ENCODE measurements at regions of chr2 and their contacts with region 1.

Region 1: DNA sequence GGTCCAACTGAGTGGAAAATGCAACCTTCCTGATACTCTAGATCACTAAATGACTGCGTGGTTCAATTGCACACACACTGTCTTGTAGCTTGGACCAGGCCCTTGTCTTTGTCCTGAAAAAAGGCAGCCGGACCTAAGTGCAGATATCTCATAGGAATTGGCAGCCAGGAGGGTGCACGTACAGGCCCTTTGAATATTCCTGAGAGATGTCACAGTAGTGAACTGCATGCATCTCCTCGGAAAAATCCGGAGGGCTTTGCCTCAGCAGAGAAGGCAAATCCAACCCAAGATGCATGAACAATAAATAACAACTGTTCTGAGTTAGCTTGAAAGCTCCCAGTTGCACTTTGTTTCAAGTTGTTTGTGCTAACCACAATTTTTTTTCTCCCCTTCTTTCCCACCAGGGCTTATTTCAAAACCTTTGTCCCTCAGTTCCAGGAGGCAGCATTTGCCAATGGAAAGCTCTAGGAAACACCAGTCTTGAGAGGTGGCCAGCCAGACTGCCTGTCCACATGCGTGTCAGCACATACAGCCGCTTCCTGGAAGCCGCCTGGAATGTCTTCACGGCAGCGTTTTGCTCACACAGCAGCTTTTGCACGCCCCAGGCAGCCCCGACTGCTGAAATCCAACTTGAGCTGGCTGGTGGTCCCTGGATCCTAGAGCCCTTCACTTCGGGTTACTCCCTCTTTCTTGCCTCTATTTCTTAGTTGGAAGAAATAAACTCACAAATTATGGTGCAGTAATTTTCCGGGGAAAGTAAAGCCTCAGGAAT is 54.4 kb upstream of the FOSL2 start:
- DNase-seq: peak; percentile 94
- H3K4me3 ChIP-seq: no peak overlapping the region
- H3K27ac ChIP-seq: peak overlapping the region; percentile 48 to 73 (median 62)
- H3K4me1 ChIP-seq: peaks cover 0 to 66% (median 50%) of the 10 kb centered on the region in 4 donors
- H3K27me3 ChIP-seq: no peaks in the 10 kb centered on the region
- CTCF ChIP-seq: no peak
- EP300 ChIP-seq: peak in 1 of 4 donors; percentile 65
- POLR2A ChIP-seq: no peak

Region 2: DNA sequence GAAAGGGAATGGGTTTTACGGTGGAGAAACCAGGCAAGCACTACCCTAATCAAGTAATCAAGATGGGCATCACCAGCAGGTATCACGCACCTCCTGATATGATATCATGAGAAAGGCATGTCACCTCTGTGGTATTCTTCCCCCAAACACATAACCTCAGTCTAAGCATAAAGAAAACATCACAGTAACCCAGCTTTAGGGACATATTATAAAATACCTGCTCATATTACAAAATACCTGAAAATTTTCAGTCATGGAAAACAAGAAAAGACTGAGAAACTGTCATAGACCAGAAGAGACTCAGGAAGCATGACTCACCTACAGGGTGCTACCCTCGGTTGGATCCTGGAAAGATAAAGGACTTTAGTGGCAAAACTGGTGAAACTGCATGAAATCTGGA is 811.0 kb before region 1 on chr2:
- intact Hi-C with region 1: no loop called
- DNase-seq: no peak
- H3K4me3 ChIP-seq: no peak overlapping the region
- H3K27ac ChIP-seq: no peak overlapping the region
- H3K4me1 ChIP-seq: no peaks in the 10 kb centered on the region
- H3K27me3 ChIP-seq: no peaks in the 10 kb centered on the region
- CTCF ChIP-seq: no peak
- EP300 ChIP-seq: no peak
- POLR2A ChIP-seq: no peak

Region 3: GRCh38 chr2:28300485-28301341 is 37.5 kb before region 1 on chr2:
- intact Hi-C with region 1: loop called (anchors 5 kb)
- DNase-seq: peak; percentile 77
- H3K4me3 ChIP-seq: peak overlapping the region; percentile 13 to 36 (median 26)
- H3K27ac ChIP-seq: peak overlapping the region; percentile 72 to 89 (median 82)
- H3K4me1 ChIP-seq: peaks cover 0 to 20% (median 19%) of the 10 kb centered on the region in 4 donors
- H3K27me3 ChIP-seq: no peaks in the 10 kb centered on the region
- CTCF ChIP-seq: no peak
- EP300 ChIP-seq: peak; percentile 86 to 97 (median 96)
- POLR2A ChIP-seq: no peak

Region 4: DNA sequence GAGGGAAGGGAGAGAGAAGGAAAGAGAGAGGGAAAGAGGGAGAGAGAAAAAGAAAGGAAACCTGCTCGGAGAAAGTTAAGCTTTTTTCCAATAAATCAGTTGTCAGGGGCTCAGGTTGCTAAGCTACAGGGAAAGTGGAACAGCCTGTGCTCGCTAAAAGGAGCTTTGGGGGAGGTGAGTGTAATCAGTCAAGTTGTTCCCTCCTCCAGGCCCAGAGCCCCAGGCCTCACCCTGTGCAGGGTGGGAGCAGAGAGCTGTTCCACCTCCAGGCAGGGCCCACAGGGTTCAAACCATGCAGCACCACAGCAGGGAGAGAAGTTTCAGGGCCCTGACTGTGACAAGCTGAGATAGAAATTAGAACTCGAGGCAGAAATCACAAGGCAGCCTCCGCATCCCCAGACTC is 357.0 kb after region 1 on chr2:
- intact Hi-C with region 1: no loop called
- DNase-seq: no peak
- H3K4me3 ChIP-seq: no peak overlapping the region
- H3K27ac ChIP-seq: peak overlapping the region in 3 of 4 donors; percentile 50 to 58 (median 54)
- H3K4me1 ChIP-seq: peaks cover 0 to 24% (median 21%) of the 10 kb centered on the region in 4 donors
- H3K27me3 ChIP-seq: no peaks in the 10 kb centered on the region
- CTCF ChIP-seq: no peak
- EP300 ChIP-seq: peak in 2 of 4 donors; percentile 32 to 39
- POLR2A ChIP-seq: no peak

Measured in sigmoid colon (tissue), 7 donors.